ENCODE measurements at regions of chrX and their contacts with region 1.

Region 1: GRCh38 chrX:130060122-130061069 is 49.9 kb downstream of the ELF4 start:
- DNase-seq: peak; percentile 80
- ATAC-seq: peak; percentile 91
- H3K4me3 Mint-ChIP-seq: peak overlapping the region; percentile 72
- H3K27ac Mint-ChIP-seq: peak overlapping the region; percentile 77
- H3K4me1 Mint-ChIP-seq: peaks cover 5% of the 10 kb centered on the region
- H3K27me3 Mint-ChIP-seq: no peaks in the 10 kb centered on the region
- CTCF ChIP-seq: peak; percentile 66

Region 2: DNA sequence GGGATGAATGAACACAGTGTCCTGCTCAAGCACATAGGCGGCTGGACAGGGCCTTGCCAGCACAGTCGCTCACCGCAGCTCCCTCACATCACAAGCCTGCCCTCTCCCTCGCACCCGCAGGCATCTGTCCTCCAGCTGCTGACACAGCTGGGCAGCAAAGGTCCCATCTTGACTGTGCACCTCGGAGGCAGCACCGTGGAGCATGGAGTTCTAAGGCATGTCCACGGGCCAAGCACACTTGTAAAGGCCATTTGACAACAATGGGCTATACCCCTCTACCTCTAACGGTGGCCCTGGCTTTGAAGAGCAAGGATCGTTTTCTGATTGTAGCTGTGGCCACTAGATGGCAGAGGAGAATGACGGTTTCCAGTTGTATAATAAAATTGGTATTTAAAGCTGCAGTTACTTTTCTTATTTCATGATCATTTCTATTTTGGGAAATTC is 459.4 kb before region 1 on chrX:
- CTCF ChIA-PET with region 1: interaction called, 19 read pairs
- POLR2A ChIA-PET with region 1: no interaction called
- intact Hi-C with region 1: loop called (anchors 10 kb)
- DNase-seq: peak; percentile 30
- ATAC-seq: peak; percentile 50
- H3K4me3 Mint-ChIP-seq: no peak overlapping the region
- H3K27ac Mint-ChIP-seq: no peak overlapping the region
- H3K4me1 Mint-ChIP-seq: peaks cover 19% of the 10 kb centered on the region
- H3K27me3 Mint-ChIP-seq: no peaks in the 10 kb centered on the region
- CTCF ChIP-seq: peak; percentile 61

Region 3: GRCh38 chrX:129606918-129607317 is 453.5 kb before region 1 on chrX:
- CTCF ChIA-PET with region 1: interaction called, 19 read pairs
- POLR2A ChIA-PET with region 1: no interaction called
- intact Hi-C with region 1: loop called (anchors 10 kb)
- DNase-seq: peak; percentile 58
- ATAC-seq: peak; percentile 54
- H3K4me3 Mint-ChIP-seq: no peak overlapping the region
- H3K27ac Mint-ChIP-seq: no peak overlapping the region
- H3K4me1 Mint-ChIP-seq: peaks cover 19% of the 10 kb centered on the region
- H3K27me3 Mint-ChIP-seq: no peaks in the 10 kb centered on the region
- CTCF ChIP-seq: peak; percentile 41

Region 4: GRCh38 chrX:129654419-129655165 is 405.8 kb before region 1 on chrX and contains the start of gene APLN:
- CTCF ChIA-PET with region 1: no interaction called
- POLR2A ChIA-PET with region 1: no interaction called
- intact Hi-C with region 1: no loop called
- DNase-seq: peak; percentile 19
- ATAC-seq: peak; percentile 73
- H3K4me3 Mint-ChIP-seq: peak within 1 kb of the TSS; percentile 66
- H3K27ac Mint-ChIP-seq: no peak within 1 kb of the TSS
- H3K4me1 Mint-ChIP-seq: peaks cover 3% of the 10 kb centered on the region
- H3K27me3 Mint-ChIP-seq: peaks cover 10% of the 10 kb centered on the region
- CTCF ChIP-seq: no peak
- total RNA-seq, gene APLN: 3.5 TPM

Region 5: GRCh38 chrX:129996120-129996519 is 64.3 kb before region 1 on chrX:
- CTCF ChIA-PET with region 1: no interaction called
- POLR2A ChIA-PET with region 1: no interaction called
- intact Hi-C with region 1: no loop called
- DNase-seq: no peak
- ATAC-seq: no peak
- H3K4me3 Mint-ChIP-seq: no peak overlapping the region
- H3K27ac Mint-ChIP-seq: no peak overlapping the region
- H3K4me1 Mint-ChIP-seq: peaks cover under 1% of the 10 kb centered on the region
- H3K27me3 Mint-ChIP-seq: no peaks in the 10 kb centered on the region
- CTCF ChIP-seq: no peak

Region 6: DNA sequence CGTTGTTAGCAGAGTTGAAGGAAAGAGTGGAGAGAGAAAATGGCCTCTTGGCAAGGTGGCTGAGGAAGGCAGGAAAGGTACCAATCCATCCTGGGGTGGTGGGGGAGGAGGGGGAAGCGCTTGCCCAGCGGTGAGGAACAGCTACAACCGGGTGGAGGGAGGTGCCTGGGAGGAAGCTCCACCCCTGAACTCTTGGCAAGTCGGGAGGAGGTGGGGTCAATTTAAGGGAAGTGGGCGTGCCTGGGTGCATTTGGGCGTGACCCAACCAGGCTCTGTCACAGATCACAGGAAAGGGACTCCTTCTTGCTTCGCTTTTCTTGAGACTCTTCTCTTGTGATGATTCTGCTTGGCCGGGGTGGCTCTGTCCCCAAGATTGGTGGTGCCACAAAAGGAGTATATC is 36.3 kb before region 1 on chrX:
- CTCF ChIA-PET with region 1: interaction called, 17 read pairs
- POLR2A ChIA-PET with region 1: no interaction called
- intact Hi-C with region 1: no loop called
- DNase-seq: peak; percentile 89
- ATAC-seq: peak; percentile 100
- H3K4me3 Mint-ChIP-seq: no peak overlapping the region
- H3K27ac Mint-ChIP-seq: peak overlapping the region; percentile 52
- H3K4me1 Mint-ChIP-seq: peaks cover 10% of the 10 kb centered on the region
- H3K27me3 Mint-ChIP-seq: no peaks in the 10 kb centered on the region
- CTCF ChIP-seq: no peak

Region 7: GRCh38 chrX:130047411-130047810 is 13.0 kb before region 1 on chrX:
- CTCF ChIA-PET with region 1: interaction called, 16 read pairs
- POLR2A ChIA-PET with region 1: no interaction called
- intact Hi-C with region 1: no loop called
- DNase-seq: no peak
- ATAC-seq: no peak
- H3K4me3 Mint-ChIP-seq: no peak overlapping the region
- H3K27ac Mint-ChIP-seq: no peak overlapping the region
- H3K4me1 Mint-ChIP-seq: no peaks in the 10 kb centered on the region
- H3K27me3 Mint-ChIP-seq: no peaks in the 10 kb centered on the region
- CTCF ChIP-seq: no peak